ENCODE measurements at regions of chr1 and their contacts with region 1.

Region 1: DNA sequence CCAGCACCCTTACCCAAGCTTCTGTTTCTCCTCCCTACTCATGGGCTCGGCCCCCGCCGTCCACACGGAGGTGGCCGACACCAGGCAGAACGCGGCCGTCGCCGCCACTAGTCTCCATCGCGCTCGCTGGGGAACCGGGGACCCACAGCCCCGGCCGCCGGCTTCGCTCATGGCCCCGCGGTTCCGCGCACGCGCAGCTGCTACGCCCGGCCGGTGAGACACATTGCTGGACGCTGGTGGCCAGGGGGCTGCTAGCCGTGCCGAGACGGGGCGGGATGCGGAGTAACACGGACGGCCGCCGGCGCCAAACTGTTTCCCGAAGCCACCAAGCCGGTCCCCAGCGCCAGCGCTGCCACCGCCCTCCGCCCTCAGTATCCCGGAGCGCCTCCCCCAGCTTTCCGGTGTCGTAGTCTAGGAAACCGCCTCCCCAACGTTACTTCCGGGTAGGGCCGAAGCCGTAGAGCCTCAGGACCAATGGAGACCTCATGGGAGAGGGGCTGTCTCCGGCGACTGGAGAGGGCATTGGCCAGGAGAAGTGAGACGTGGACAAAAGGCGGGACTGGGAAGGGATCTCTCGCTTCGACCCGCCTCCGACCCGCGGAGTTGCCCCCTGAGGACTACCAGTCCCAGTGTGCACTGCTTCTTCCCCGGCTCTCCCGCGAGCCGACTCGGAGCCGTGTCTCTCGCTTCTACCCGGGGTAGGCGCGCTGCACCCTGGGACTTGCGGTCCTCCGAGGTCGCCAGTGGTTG is at the start of gene EDEM3:
- DNase-seq: peak; percentile 98
- H3K4me3 ChIP-seq: peak within 1 kb of the TSS; percentile 96
- H3K27ac ChIP-seq: peak within 1 kb of the TSS; percentile 96
- H3K4me1 ChIP-seq: peaks cover 42% of the 10 kb centered on the region
- H3K27me3 ChIP-seq: no peaks in the 10 kb centered on the region
- CTCF ChIP-seq: no peak
- total RNA-seq, gene EDEM3: 16.9 TPM

Region 2: DNA sequence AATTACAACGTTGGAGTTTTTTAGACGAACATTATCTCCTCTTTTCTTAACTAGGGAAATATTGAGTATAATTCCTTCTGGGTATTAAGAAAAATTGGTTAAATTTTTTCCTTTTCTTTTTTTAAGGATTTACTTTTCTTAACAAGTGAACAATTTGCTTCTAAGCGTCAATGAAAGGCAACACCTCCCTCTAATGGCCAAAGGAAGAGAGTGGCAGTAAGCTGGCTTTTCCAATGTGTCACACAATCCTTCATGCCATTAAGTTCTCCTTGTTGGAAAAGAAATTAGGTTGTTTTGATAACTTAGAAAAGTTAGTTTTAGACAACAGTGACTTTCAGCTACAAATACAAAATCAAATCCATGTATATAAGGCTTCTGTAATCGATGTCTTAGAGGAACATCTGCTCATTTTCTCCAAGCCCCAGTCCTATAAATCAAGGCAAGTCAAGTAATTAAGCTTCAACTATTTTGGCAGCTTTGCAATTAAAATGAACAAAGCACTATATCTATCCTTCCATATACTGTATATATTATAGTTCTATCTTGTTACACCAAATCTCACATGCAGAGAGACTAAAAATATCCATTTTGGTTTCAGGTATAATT is 62.8 kb before region 1 on chr1:
- intact Hi-C with region 1: loop called (anchors 10 kb)
- DNase-seq: no peak
- H3K4me3 ChIP-seq: no peak overlapping the region
- H3K27ac ChIP-seq: no peak overlapping the region
- H3K4me1 ChIP-seq: no peaks in the 10 kb centered on the region
- H3K27me3 ChIP-seq: no peaks in the 10 kb centered on the region
- CTCF ChIP-seq: peak; percentile 88

Region 3: DNA sequence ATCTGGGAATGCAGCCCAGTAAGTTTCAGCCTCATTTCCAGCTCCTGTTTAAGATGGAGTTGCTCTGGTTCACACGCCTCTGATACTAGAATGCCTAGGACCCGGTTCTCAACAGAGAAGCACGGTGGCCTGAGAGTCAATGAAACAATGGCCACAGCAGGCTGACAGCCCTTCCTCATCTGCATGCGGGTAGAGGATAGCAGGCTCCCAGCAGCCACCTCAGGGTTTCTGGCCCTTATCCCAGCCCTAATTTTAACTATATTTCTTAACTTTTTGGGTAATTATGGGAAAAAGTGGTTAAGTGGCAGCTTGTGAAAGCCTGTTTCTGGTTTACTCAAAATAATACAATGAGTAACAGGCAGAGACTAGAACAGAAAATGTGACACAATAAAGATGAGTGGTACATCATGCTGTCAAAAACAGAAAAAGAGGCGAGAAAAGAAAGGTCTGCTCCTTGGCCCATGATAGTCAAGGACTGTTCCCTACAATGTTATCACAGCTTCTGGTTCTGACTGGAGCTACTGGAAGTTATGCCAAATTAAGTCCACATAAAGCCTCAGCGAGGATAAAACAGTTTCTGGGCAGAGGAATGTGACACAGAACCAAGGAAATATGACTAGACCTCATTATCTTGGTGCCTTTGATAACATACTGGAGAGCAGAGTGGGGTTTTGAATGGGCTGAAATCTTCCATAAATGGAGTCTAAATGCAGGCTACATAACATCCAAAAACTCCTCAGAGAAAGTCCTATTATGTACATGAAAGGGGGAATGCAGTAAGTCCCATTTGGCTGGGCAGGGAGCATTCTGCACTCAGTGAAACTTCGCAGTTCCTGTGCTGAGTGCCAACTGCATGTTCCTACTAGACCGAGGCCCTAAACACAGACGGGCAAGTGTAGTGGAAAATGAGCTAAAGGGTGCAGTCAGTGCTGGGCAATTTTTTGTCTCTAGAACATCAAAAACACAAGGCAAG is 127.6 kb after region 1 on chr1:
- intact Hi-C with region 1: no loop called
- DNase-seq: peak; percentile 35
- H3K4me3 ChIP-seq: no peak overlapping the region
- H3K27ac ChIP-seq: peak overlapping the region; percentile 87
- H3K4me1 ChIP-seq: peaks cover 98% of the 10 kb centered on the region
- H3K27me3 ChIP-seq: no peaks in the 10 kb centered on the region
- CTCF ChIP-seq: no peak

Measured in left ventricle myocardium inferior (tissue), 1 donor.